HCT116 (cell line): ENCODE measurements at regions of chr9 and their contacts with region 1.

Region 1: DNA sequence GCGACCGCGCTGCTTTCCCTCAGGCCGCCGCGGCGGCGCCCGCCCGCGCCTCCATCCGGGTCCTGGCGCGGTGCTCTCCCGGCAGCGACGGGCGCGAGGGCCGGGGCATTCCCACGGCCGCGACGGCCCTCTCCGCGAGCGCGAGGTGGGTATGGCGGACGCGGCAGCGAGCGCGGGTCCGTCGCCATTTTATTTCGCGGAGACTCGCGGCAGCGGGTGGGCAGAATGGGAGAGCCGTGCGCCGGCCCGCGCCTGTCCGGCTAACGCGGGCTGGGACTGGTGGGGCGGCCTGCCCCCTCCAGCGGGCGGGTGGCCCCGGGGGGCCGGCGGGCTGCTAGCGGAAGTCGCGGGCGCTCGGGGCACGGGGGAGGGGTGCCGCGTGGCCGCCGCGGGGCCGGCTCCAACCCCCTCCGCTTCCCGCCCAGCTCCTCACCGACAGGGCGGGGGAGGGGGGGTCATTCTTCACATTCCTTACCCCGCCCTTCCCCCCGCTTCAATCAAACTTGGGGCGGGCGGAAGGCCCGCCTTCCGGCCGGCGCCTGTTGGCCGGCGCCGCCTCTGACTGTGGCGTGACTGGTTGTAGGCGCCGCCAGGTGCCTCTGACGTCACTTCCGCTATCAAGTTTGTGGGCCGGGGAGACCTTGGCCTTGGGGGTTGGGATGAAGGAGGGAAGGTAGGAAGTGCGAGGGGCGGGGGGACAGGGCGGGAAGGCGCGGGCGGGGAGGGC is 82.1 kb downstream of the PTPDC1 start:
- DNase-seq: peak; percentile 98
- ATAC-seq: peak; percentile 76
- H3K4me3 ChIP-seq: peak overlapping the region; percentile 74 to 79
- H3K27ac ChIP-seq: peak overlapping the region; percentile 99
- H3K4me1 ChIP-seq: peaks cover 8 to 24% of the 10 kb centered on the region in 2 experiments
- H3K27me3 ChIP-seq: no peaks in the 10 kb centered on the region
- CTCF ChIP-seq: no peak
- POLR2A ChIP-seq: peak; percentile 18
- RAD21 ChIP-seq: no peak

Region 2: GRCh38 chr9:94065535-94065961 is 100.9 kb before region 1 on chr9:
- CTCF ChIA-PET with region 1: interaction called, 4 read pairs
- POLR2A ChIA-PET with region 1: no interaction called
- RAD21 ChIA-PET with region 1: no interaction called
- intact Hi-C with region 1: loop called (anchors 2 kb)
- DNase-seq: peak; percentile 76
- ATAC-seq: peak; percentile 96
- H3K4me3 ChIP-seq: no peak overlapping the region
- H3K27ac ChIP-seq: no peak overlapping the region
- H3K4me1 ChIP-seq: peaks cover 0 to 4% of the 10 kb centered on the region in 2 experiments; a peak in 1 of 4 replicates
- H3K27me3 ChIP-seq: no peaks in the 10 kb centered on the region
- CTCF ChIP-seq: peak; percentile 72 to 94 (median 83); a peak in 5 of 6 replicates
- POLR2A ChIP-seq: no peak
- RAD21 ChIP-seq: peak; percentile 87

Region 3: GRCh38 chr9:94097788-94098414 is 68.5 kb before region 1 on chr9:
- CTCF ChIA-PET with region 1: no interaction called
- POLR2A ChIA-PET with region 1: interaction called, 3 read pairs
- RAD21 ChIA-PET with region 1: no interaction called
- intact Hi-C with region 1: loop called (anchors 5 kb)
- DNase-seq: peak; percentile 75
- ATAC-seq: peak; percentile 95
- H3K4me3 ChIP-seq: peak overlapping the region in 1 of 2 experiments; percentile 9; a peak in 2 of 4 replicates
- H3K27ac ChIP-seq: peak overlapping the region; percentile 53
- H3K4me1 ChIP-seq: peaks cover 27 to 28% of the 10 kb centered on the region in 2 experiments
- H3K27me3 ChIP-seq: no peaks in the 10 kb centered on the region
- CTCF ChIP-seq: no peak
- POLR2A ChIP-seq: no peak
- RAD21 ChIP-seq: no peak

Region 4: DNA sequence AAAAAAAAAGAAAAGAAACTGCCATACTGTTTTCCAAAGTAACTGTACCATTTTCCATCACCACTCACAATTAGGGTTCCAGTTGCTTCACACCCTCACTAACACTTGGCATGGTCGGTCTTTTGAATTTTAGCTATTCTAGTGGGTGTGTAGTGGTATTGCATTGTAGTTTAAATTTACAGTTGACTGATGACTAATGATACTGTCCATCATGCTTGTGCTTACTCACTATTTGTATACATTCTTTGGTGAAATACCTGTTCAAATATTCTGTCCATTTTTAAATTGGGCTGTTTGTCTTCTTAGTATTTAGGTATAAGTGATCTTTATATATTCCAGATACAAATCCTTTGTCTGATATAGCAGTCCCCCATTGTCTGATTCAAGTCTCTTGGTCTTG is 56.5 kb after region 1 on chr9:
- CTCF ChIA-PET with region 1: no interaction called
- POLR2A ChIA-PET with region 1: no interaction called
- RAD21 ChIA-PET with region 1: no interaction called
- intact Hi-C with region 1: no loop called
- DNase-seq: no peak
- ATAC-seq: no peak
- H3K4me3 ChIP-seq: no peak overlapping the region
- H3K27ac ChIP-seq: no peak overlapping the region
- H3K4me1 ChIP-seq: no peaks in the 10 kb centered on the region
- H3K27me3 ChIP-seq: no peaks in the 10 kb centered on the region
- CTCF ChIP-seq: no peak
- POLR2A ChIP-seq: no peak
- RAD21 ChIP-seq: no peak